ENCODE measurements at regions of chr9 and their contacts with region 1.

Region 1: DNA sequence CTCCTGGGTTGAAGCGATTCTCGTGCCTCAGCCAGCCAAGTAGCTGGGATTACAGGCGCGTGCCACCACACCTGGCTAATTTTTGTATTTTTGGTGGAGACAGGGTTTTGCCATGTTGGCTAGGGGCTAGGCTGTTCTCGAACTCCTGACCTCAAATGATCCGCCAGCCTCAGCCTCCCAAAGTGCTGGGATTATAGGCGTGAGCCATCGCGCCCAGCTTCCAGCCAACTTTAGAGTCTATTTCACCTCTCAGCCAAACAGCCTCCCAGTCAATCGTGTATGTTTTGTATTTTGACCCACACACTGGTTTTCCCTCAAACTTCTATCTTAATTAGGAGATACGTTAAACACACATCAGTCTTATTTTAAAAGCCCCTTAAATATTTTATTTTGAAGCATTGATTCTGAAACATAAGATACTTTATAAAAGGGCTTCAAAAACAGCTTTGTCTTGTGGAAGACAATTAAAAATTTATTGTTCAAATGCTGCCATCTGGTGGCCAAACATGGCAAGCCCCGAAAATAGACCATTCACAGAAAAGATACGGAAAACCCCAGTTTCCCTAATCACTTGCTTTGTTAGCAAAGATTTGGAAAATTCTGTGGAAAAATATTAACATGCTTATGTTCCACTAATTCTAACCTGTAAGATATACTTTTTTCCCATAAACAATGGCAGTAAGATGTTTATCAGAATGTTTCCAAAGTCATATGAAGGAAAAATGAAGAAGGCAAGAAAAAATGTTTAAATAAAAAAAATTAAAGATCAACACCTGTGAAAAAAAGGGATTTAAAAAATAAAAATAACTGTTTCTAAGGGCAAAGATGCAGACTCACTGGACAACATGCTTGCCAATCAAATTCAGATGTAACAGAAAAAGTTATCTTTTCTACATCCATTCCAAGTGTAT is 33.1 kb downstream of the APTX start:
- DNase-seq: peak in 7 of 9 donors; percentile 7 to 51 (median 35)
- ATAC-seq: no peak
- H3K4me3 ChIP-seq: no peak overlapping the region
- H3K4me3 Mint-ChIP-seq: no peak overlapping the region
- H3K27ac ChIP-seq: no peak overlapping the region
- H3K27ac Mint-ChIP-seq: peak overlapping the region in 2 of 9 donors; percentile 75 to 80
- H3K4me1 ChIP-seq: no peaks in the 10 kb centered on the region
- H3K4me1 Mint-ChIP-seq: peaks cover 0 to 5% (median 0%) of the 10 kb centered on the region in 7 donors
- H3K27me3 ChIP-seq: no peaks in the 10 kb centered on the region
- H3K27me3 Mint-ChIP-seq: no peaks in the 10 kb centered on the region

Region 2: DNA sequence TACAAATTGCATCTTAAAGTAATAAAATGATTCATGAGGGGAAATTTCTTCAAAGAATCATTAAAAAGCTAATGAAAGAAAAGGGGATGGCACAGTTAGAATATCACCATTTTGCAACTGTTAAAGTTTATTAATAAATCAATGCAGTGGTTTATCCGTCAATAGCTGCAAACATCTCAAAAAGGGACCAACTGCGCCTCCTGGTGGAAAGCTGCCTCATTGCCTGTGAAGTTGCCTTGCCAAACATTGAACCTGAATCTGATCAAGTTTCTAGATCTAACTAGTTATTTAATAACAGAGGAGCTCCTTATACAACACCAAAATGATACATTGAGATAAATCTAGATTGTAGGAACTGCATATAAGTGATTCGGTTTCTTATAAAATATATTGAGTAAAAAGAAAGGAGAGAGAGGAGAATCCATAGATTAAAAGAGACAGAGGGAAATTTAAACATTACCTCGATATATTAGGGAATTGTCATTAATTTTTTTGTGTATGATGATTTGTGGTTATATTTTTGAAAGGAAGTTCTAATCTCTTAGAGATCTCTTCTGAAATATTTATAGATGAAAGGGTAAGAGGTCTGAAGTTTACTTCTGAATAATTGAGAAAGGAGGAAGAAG is 388.5 kb before region 1 on chr9:
- CTCF ChIA-PET with region 1: interaction called, 17 read pairs
- POLR2A ChIA-PET with region 1: no interaction called
- intact Hi-C with region 1: loop called (anchors 1 kb)
- DNase-seq: peak; percentile 53 to 77 (median 66)
- ATAC-seq: peak; percentile 81
- H3K4me3 ChIP-seq: no peak overlapping the region
- H3K4me3 Mint-ChIP-seq: no peak overlapping the region
- H3K27ac ChIP-seq: no peak overlapping the region
- H3K27ac Mint-ChIP-seq: peak overlapping the region in 1 of 9 donors; percentile 48
- H3K4me1 ChIP-seq: no peaks in the 10 kb centered on the region
- H3K4me1 Mint-ChIP-seq: peaks cover 0 to 8% (median 0%) of the 10 kb centered on the region in 7 donors
- H3K27me3 ChIP-seq: no peaks in the 10 kb centered on the region
- H3K27me3 Mint-ChIP-seq: peaks cover 4 to 30% (median 7%) of the 10 kb centered on the region in 5 donors

Region 3: DNA sequence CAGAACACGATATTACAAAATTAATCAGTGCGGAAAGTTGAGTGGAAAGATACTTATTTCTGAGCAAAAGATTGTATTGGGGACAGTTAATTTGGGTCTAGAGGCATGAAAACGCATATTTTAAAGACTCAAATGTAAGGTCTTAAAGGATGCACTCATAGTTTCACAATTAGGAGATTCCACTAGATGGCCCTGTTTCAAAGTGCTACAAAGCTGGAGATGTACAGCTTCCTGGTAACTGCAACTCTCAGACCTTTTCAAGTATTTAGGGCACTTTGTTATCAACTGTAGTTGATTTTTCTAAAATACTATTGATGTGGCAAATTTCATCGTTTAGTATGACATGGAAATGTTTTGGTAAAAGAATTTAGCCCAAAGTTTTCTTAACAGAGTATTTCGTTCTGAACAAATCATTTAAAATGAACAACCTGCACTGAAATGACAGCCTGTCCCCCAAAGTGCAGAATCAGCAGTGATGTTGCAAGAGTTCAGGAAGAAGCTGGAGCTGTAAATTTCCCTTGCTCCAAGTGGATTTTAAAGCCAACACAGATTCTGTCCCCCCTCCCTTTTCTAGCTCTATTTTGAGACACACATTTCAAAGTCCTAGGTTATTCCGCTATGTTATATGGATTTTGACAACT is 379.2 kb before region 1 on chr9:
- CTCF ChIA-PET with region 1: interaction called, 5 read pairs
- POLR2A ChIA-PET with region 1: no interaction called
- intact Hi-C with region 1: loop called (anchors 1 kb)
- DNase-seq: peak in 2 of 9 donors; percentile 12 to 28
- ATAC-seq: peak; percentile 58
- H3K4me3 ChIP-seq: no peak overlapping the region
- H3K4me3 Mint-ChIP-seq: no peak overlapping the region
- H3K27ac ChIP-seq: no peak overlapping the region
- H3K27ac Mint-ChIP-seq: no peak overlapping the region
- H3K4me1 ChIP-seq: no peaks in the 10 kb centered on the region
- H3K4me1 Mint-ChIP-seq: no peaks in the 10 kb centered on the region
- H3K27me3 ChIP-seq: no peaks in the 10 kb centered on the region
- H3K27me3 Mint-ChIP-seq: peaks cover 0 to 37% (median 31%) of the 10 kb centered on the region in 5 donors

Measured in naive thymus-derived CD4-positive, alpha-beta T cell (primary cell).